ENCODE measurements at regions of chr3 and their contacts with region 1.

Region 1: DNA sequence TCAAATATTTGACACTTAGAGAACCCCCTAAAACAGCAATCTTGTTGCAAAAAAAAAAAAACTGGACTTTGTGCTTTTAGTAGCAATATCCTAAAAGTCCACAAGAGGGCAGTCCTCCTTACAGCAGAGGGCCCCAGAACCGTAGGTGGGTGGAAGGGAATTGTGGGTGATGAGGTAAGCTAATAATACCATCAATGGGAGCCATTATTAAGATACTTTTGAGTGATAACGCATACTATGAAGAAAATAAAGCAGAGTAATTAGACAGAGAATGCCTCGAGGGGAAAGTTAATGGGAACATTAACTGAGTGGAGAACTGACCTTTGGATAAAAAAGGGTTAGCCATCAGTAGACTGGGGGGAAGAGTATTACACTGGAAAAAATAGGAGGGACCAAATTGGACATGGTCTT is 229.9 kb downstream of the THRB start:
- DNase-seq: no peak
- ATAC-seq: peak; percentile 60

Region 2: DNA sequence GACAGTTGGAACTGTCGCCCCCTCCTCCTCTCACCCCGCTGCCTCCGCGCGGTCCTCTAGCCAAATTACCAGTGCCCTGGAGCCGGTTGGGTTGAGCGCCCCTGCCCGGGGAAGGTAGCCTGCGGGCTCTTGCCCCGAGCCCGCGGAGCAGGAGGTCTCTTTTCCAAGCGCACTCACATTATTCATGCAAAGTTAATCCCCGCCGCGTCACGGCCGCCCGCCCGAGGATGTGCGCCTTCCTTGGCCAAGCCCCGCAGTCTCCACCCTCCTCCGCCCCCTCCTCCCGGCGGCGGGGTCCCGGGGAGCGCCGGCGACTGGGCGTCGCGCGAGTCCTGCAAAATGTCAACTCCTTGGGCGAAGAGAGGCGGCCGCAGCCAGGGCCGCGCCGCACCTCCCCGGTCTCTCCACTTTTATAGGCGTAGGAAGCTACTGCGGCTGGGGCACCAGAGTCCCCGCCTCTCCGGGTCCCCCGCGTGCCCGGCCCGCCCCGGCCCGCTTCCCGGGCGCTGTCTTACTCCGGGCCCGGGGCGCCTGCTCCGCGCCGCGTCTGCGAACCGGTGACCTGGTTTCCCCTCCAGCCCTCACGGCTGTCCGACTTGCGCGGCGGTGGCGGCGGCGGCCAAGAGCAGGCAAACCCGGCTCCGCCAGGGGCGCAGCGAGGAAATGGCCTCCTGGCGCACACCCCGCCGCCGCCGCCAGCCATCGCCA is 230.0 kb after region 1 on chr3 and contains the start of gene THRB:
- intact Hi-C with region 1: loop called (anchors 10 kb)
- DNase-seq: peak; percentile 88
- ATAC-seq: peak; percentile 75
- total RNA-seq, gene THRB: 23.1 TPM

Measured in left ventricle myocardium superior (tissue), 1 donor.